AG04450 (cell line): ENCODE measurements at regions of chr12 and their contacts with region 1.

Region 1: GRCh38 chr12:55817346-55818139 is at the starts of genes ORMDL2 and SARNP:
- DNase-seq: peak; percentile 99
- H3K4me3 ChIP-seq: peak within 1 kb of the TSS; percentile 86
- H3K27ac ChIP-seq: peak within 1 kb of the TSS; percentile 59
- H3K27me3 ChIP-seq: no peaks in the 10 kb centered on the region
- CTCF ChIP-seq: no peak
- polyA plus RNA-seq, gene ORMDL2: 40.9 and 49.3 TPM in 2 replicates
- polyA plus RNA-seq, gene SARNP: 129 and 178 TPM in 2 replicates

Region 2: GRCh38 chr12:55797068-55797467 is 20.5 kb before region 1 on chr12:
- CTCF ChIA-PET with region 1: interaction called, 10 read pairs
- POLR2A ChIA-PET with region 1: no interaction called
- DNase-seq: no peak
- H3K4me3 ChIP-seq: no peak overlapping the region
- H3K27ac ChIP-seq: no peak overlapping the region
- H3K27me3 ChIP-seq: no peaks in the 10 kb centered on the region
- CTCF ChIP-seq: peak; percentile 61

Region 3: GRCh38 chr12:55829967-55830600 is 12.5 kb after region 1 on chr12:
- CTCF ChIA-PET with region 1: no interaction called
- POLR2A ChIA-PET with region 1: interaction called, 30 read pairs
- DNase-seq: no peak
- H3K4me3 ChIP-seq: peak overlapping the region; percentile 91
- H3K27ac ChIP-seq: peak overlapping the region; percentile 81
- H3K27me3 ChIP-seq: no peaks in the 10 kb centered on the region
- CTCF ChIP-seq: no peak

Region 4: DNA sequence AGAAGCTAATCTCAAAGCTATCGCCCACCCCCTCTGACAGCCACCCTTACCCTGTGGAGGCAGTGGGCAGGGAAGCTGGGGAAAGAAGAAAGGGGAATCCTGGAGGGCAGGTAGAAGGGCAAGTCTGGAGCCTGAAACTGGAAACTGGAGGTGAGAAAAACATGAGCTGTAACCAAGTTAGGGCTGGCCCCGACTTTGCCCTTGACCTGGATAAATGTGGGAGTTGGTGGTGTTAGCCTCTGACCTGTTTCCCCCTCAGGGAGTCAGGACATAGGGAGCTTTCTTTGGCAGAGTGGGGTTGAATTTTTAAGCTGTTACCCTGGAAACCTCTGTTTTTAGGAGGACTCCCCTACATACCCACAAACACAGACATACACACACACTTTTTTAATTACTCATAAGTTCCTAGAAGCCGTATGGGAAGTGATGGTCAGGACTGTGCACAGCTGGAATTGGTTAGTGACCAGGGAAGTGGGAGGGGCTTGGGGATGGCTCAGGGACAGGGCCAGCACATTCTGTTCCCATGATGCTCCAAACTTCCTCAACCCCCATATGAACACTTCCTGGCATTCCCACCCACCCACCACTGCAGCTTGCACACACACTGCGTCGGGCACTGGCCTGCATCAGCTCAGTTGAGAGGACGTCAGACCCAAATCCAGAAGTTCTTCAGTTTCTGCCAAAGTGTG is 30.2 kb after region 1 on chr12:
- CTCF ChIA-PET with region 1: interaction called, 3 read pairs
- POLR2A ChIA-PET with region 1: interaction called, 14 read pairs
- DNase-seq: peak; percentile 99
- H3K4me3 ChIP-seq: peak overlapping the region; percentile 39
- H3K27ac ChIP-seq: peak overlapping the region; percentile 98
- H3K27me3 ChIP-seq: no peaks in the 10 kb centered on the region
- CTCF ChIP-seq: no peak

Region 5: DNA sequence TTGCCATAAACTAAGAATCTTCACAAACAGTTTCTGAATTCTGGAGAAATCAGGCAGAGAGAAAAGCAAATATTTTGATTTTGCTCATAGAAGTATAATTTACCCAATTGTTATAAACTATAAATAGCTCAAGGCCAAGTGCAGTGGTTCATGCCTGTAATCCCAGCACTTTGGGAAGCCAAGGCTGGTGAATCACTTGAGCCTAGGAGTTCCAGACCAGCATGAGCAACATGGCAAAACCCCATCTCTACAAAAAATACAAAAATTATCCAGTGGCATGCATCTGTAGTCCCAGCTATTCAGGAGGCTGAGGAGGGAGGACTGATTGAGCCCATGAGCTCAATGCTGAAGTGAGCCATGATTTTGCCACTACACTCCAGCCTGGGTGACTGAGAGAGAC is 44.7 kb after region 1 on chr12:
- CTCF ChIA-PET with region 1: no interaction called
- POLR2A ChIA-PET with region 1: no interaction called
- DNase-seq: no peak
- H3K4me3 ChIP-seq: no peak overlapping the region
- H3K27ac ChIP-seq: no peak overlapping the region
- H3K27me3 ChIP-seq: no peaks in the 10 kb centered on the region
- CTCF ChIP-seq: no peak

Region 6: GRCh38 chr12:55926738-55927587 is 109.4 kb after region 1 on chr12:
- CTCF ChIA-PET with region 1: interaction called, 11 read pairs
- POLR2A ChIA-PET with region 1: interaction called, 3 read pairs
- DNase-seq: peak; percentile 74
- H3K4me3 ChIP-seq: peak overlapping the region; percentile 97
- H3K27ac ChIP-seq: peak overlapping the region; percentile 93
- H3K27me3 ChIP-seq: no peaks in the 10 kb centered on the region
- CTCF ChIP-seq: peak; percentile 86

Region 7: GRCh38 chr12:55940065-55940732 is 122.7 kb after region 1 on chr12:
- CTCF ChIA-PET with region 1: interaction called, 31 read pairs
- POLR2A ChIA-PET with region 1: interaction called, 5 read pairs
- DNase-seq: peak; percentile 60
- H3K4me3 ChIP-seq: no peak overlapping the region; the same call in 1 of the 2 replicates
- H3K27ac ChIP-seq: no peak overlapping the region
- H3K27me3 ChIP-seq: no peaks in the 10 kb centered on the region
- CTCF ChIP-seq: peak; percentile 93

Region 8: GRCh38 chr12:55973598-55974307 is 156.2 kb after region 1 on chr12 and contains the start of gene RAB5B:
- CTCF ChIA-PET with region 1: no interaction called
- POLR2A ChIA-PET with region 1: interaction called, 11 read pairs
- DNase-seq: peak; percentile 100
- H3K4me3 ChIP-seq: peak within 1 kb of the TSS; percentile 94
- H3K27ac ChIP-seq: peak within 1 kb of the TSS; percentile 87
- H3K27me3 ChIP-seq: no peaks in the 10 kb centered on the region
- CTCF ChIP-seq: peak; percentile 29; the same call in 1 of the 2 replicates
- polyA plus RNA-seq, gene RAB5B: 136 and 157 TPM in 2 replicates